Right ventricle myocardium inferior (tissue), 1 donor: ENCODE measurements at regions of chr22 and their contacts with region 1.

Region 1: DNA sequence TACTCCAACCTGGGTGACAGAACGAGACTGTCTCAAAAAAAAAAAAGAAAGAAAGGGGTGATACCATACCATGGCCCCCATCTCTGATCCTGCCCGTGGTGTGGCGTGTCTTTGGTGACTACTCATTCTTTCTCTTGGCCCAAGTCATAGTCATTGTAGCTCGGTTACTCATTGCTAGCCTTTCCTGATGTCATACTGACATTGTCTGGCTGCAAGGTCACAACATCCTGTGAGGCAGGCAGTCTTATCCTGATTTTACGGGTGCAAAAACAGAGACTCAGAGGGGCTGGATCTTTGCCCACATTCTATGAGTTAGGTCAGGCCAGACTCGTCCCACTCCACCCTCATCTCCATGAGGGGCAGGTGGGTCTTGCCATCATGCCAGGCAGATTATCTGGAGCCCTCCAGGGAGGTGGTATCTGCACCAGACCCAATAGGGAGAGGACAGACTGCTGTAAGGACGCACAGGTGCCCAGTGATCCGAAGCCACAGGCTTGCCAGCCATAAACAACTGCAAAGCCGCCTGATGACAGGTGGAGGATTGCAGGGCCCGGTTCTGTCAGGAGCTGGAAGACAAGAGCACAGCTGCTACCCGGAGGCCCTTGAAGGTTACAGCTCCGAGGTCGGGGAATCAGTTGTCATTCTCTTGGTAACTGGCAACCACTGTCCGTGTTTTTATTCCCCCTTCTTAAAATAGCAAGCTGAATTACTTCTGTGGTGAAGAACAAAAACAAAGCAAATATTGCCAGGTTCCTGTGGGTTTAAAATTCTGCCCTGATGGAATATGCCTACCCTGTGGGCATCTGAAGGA is 13.8 kb downstream of the TOM1 start:
- DNase-seq: peak; percentile 68
- ATAC-seq: peak; percentile 58

Region 2: DNA sequence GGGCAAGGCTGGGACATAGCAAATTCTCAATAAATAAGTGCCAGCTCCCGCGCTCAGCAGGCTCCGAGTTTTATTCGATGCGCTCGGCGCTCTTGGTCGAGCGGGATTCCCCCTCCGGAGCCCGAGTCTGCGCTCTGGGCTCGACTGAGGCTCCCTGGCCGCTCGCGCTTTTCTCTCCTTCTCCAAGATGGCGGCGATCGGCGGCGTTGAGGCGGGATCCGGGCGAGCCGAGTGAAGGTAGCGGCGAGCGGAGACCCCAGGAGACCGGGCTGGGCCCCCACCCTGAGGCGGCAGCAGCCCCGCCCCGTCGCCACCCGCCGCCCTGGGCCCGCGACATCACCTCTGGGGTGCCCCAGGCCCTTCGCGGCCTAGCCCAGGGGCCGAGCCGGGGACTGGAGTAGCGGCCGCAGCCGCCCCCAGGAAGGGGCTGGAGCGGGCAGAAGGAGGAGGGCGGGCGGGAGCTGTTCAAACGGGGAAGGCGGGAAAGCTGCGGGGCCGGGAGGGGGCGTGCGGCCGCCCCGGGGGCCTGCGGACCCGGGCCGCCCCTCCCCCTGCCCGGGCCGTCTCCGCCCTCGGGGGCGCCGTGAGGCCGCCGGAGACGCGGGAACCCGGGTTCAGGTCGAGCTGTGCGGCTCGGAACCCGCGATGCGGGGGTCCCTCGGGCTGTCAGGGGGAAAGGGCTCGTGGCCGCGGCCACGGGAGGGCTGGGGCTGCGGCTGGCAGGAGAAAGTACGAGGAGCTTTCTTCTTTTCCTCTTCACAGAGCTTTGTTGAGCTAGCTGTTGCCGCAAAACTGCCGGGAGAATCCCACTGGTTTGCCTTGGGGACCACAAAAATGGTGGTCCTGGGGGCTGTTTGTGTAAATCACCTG is 56.0 kb before region 1 on chr22 and contains the start of gene HMGXB4:
- intact Hi-C with region 1: loop called (anchors 5 kb)
- DNase-seq: peak; percentile 94
- ATAC-seq: peak; percentile 96
- total RNA-seq, gene HMGXB4: 9.4 TPM

Region 3: DNA sequence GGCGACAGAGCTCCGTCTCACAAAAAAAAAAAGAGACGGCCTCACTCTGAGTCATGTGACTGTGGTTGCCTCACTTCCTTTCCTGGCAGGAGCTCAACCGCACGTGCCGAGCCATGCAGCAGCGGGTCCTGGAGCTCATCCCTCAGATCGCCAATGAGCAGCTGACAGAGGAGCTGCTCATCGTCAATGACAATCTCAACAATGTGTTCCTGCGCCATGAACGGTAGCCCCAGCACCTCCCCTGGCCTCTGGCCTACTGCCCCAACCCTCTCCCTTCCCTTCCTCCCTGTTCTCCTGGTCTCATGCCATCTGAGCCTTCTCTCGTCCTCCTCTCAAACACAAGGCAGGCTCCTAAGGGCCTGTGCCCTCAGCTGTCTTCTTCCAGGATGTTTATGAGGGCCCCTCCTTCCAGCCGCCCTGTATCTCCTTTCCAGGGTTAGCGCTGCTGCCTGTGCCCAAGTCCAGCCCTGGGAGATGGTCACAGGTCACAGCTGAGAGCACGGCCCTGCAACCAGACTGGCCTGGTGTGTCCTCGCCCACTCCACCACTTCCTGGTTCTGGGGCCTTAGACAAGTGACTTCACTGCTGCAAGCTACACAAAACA is 16.8 kb after region 1 on chr22:
- intact Hi-C with region 1: loop called (anchors 1 kb)
- DNase-seq: peak; percentile 94
- ATAC-seq: peak; percentile 87